AG04449 (cell line): ENCODE measurements at regions of chr6 and their contacts with region 1.

Region 1: GRCh38 chr6:150685860-150686259 is 86.2 kb downstream of the PLEKHG1 start:
- DNase-seq: no peak
- H3K4me3 ChIP-seq: no peak overlapping the region
- CTCF ChIP-seq: peak; percentile 51

Region 2: GRCh38 chr6:150667977-150668716 is 17.7 kb before region 1 on chr6:
- CTCF ChIA-PET with region 1: no interaction called
- POLR2A ChIA-PET with region 1: no interaction called
- DNase-seq: no peak
- H3K4me3 ChIP-seq: no peak overlapping the region
- CTCF ChIP-seq: no peak

Region 3: GRCh38 chr6:150697515-150697914 is 11.7 kb after region 1 on chr6:
- CTCF ChIA-PET with region 1: interaction called, 12 read pairs
- POLR2A ChIA-PET with region 1: no interaction called
- DNase-seq: no peak
- H3K4me3 ChIP-seq: no peak overlapping the region
- CTCF ChIP-seq: no peak

Region 4: GRCh38 chr6:150717419-150717818 is 31.6 kb after region 1 on chr6:
- CTCF ChIA-PET with region 1: no interaction called
- POLR2A ChIA-PET with region 1: no interaction called
- DNase-seq: no peak
- H3K4me3 ChIP-seq: no peak overlapping the region
- CTCF ChIP-seq: no peak